BJ (cell line): ENCODE measurements at regions of chrX and their contacts with region 1.

Region 1: GRCh38 chrX:136711147-136711546 is 63.2 kb downstream of the CD40LG start:
- DNase-seq: no peak
- H3K4me3 ChIP-seq: no peak overlapping the region
- H3K27me3 ChIP-seq: no peaks in the 10 kb centered on the region
- CTCF ChIP-seq: peak; percentile 52

Region 2: GRCh38 chrX:136920001-136920400 is 208.9 kb after region 1 on chrX:
- CTCF ChIA-PET with region 1: interaction called, 18 read pairs
- POLR2A ChIA-PET with region 1: no interaction called
- DNase-seq: no peak
- H3K4me3 ChIP-seq: no peak overlapping the region
- H3K27me3 ChIP-seq: no peaks in the 10 kb centered on the region
- CTCF ChIP-seq: no peak

Region 3: DNA sequence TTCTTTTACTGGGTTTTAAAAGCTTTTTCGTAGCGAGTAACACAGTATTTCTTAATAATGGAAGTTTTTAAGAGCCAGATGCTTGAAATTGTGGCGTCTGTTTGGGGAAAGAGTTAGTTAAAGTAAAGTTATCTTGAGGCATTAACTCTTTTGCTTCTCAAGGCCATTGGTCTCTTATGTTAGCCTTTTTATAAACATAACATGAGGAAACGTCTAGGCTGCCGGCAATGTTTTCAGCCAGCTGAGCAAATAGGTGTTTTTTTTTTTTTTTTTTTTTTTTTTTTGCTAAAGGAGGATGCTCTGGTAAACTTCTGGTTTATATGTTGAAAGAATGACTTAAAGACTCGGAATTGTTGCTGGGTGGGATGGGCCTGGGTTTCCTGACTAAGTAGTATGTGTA is 220.5 kb after region 1 on chrX:
- CTCF ChIA-PET with region 1: interaction called, 11 read pairs
- POLR2A ChIA-PET with region 1: no interaction called
- DNase-seq: no peak
- H3K4me3 ChIP-seq: no peak overlapping the region
- H3K27me3 ChIP-seq: no peaks in the 10 kb centered on the region
- CTCF ChIP-seq: no peak